HCT116 (cell line): ENCODE measurements at regions of chr15 and their contacts with region 1.

Region 1: GRCh38 chr15:48352474-48353072 is 21.3 kb downstream of the DUT start:
- DNase-seq: peak; percentile 77
- ATAC-seq: peak; percentile 98
- H3K4me3 ChIP-seq: no peak overlapping the region
- H3K27ac ChIP-seq: no peak overlapping the region
- H3K4me1 ChIP-seq: peaks cover 0 to 3% of the 10 kb centered on the region in 2 experiments; a peak in 1 of 4 replicates
- H3K27me3 ChIP-seq: no peaks in the 10 kb centered on the region
- CTCF ChIP-seq: peak; percentile 58 to 93 (median 75); a peak in 5 of 6 replicates
- POLR2A ChIP-seq: no peak
- RAD21 ChIP-seq: peak; percentile 68

Region 2: GRCh38 chr15:47196057-47196456 is 1156.5 kb before region 1 on chr15:
- CTCF ChIA-PET with region 1: interaction called, 3 read pairs
- POLR2A ChIA-PET with region 1: no interaction called
- RAD21 ChIA-PET with region 1: no interaction called
- intact Hi-C with region 1: loop called (anchors 2 kb)
- DNase-seq: peak; percentile 13
- ATAC-seq: peak; percentile 46; the same call in 1 of the 2 replicates
- H3K4me3 ChIP-seq: no peak overlapping the region
- H3K27ac ChIP-seq: no peak overlapping the region
- H3K4me1 ChIP-seq: no peaks in the 10 kb centered on the region
- H3K27me3 ChIP-seq: no peaks in the 10 kb centered on the region
- CTCF ChIP-seq: peak; percentile 4 to 47 (median 44); a peak in 4 of 6 replicates
- POLR2A ChIP-seq: no peak
- RAD21 ChIP-seq: peak; percentile 34

Region 3: GRCh38 chr15:48318131-48318530 is 34.4 kb before region 1 on chr15:
- CTCF ChIA-PET with region 1: no interaction called
- POLR2A ChIA-PET with region 1: no interaction called
- RAD21 ChIA-PET with region 1: no interaction called
- intact Hi-C with region 1: no loop called
- DNase-seq: no peak
- ATAC-seq: no peak
- H3K4me3 ChIP-seq: no peak overlapping the region
- H3K27ac ChIP-seq: no peak overlapping the region
- H3K4me1 ChIP-seq: no peaks in the 10 kb centered on the region
- H3K27me3 ChIP-seq: no peaks in the 10 kb centered on the region; the same call in 1 of the 2 replicates
- CTCF ChIP-seq: no peak
- POLR2A ChIP-seq: no peak
- RAD21 ChIP-seq: no peak

Region 4: DNA sequence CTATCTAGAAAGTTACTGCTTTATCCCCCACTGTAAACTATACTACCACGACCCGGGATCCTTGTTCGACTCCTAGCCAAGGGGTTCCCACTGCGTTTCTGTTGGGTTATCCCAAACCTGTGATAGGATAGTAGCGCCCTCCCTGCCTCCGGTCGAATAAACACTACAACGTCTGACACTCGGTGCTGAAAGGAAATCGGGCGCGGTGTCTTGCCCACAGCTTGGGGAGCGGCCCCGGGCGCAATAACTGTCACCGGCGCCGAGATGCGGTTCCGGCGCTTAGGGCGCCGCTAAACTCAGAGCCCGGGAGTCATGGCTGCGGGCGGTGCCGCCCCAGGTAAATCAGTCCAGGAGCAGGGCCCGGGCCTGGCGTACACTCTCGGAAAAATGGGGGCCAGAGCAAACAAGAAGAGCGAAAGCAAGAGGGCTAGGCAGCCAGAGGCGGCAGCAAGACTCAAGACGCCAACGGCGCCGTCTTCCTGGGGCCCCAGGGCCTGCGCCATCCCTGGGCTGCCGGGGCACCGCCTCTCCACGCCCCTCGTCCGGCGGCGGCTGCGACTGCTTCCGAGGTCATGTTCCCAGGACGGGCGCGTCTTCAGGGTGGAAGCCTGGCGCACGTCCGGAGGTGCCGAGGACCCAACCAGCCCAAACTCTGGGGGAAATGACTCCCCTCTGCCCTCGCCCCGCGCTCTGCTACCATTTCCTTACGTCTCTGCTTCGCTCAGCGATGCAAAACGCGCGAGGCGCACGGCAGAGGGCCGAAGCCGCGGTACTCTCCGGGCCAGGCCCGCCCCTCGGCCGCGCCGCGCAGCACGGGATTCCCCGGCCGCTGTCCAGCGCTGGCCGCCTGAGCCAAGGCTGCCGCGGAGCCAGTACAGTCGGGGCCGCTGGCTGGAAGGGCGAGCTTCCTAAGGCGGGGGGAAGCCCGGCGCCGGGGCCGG is 21.4 kb before region 1 on chr15 and contains the start of gene DUT:
- CTCF ChIA-PET with region 1: no interaction called
- POLR2A ChIA-PET with region 1: no interaction called
- RAD21 ChIA-PET with region 1: no interaction called
- intact Hi-C with region 1: no loop called
- DNase-seq: peak; percentile 34
- ATAC-seq: peak; percentile 86
- H3K4me3 ChIP-seq: peak within 1 kb of the TSS; percentile 82 to 85
- H3K27ac ChIP-seq: peak within 1 kb of the TSS; percentile 97
- H3K4me1 ChIP-seq: peaks cover 13 to 20% of the 10 kb centered on the region in 2 experiments; a peak in 3 of 4 replicates
- H3K27me3 ChIP-seq: no peaks in the 10 kb centered on the region
- CTCF ChIP-seq: no peak
- POLR2A ChIP-seq: peak; percentile 76
- RAD21 ChIP-seq: no peak
- total RNA-seq, gene DUT: 130 TPM

Region 5: GRCh38 chr15:48541341-48542278 is 189.0 kb after region 1 on chr15:
- CTCF ChIA-PET with region 1: no interaction called
- POLR2A ChIA-PET with region 1: no interaction called
- RAD21 ChIA-PET with region 1: no interaction called
- intact Hi-C with region 1: no loop called
- DNase-seq: no peak
- ATAC-seq: no peak
- H3K4me3 ChIP-seq: no peak overlapping the region
- H3K27ac ChIP-seq: no peak overlapping the region
- H3K4me1 ChIP-seq: no peaks in the 10 kb centered on the region
- H3K27me3 ChIP-seq: no peaks in the 10 kb centered on the region
- CTCF ChIP-seq: no peak
- POLR2A ChIP-seq: no peak
- RAD21 ChIP-seq: no peak

Region 6: GRCh38 chr15:48963524-48964113 is 611.0 kb after region 1 on chr15 and contains the start of gene SHC4:
- CTCF ChIA-PET with region 1: no interaction called
- POLR2A ChIA-PET with region 1: no interaction called
- RAD21 ChIA-PET with region 1: no interaction called
- intact Hi-C with region 1: loop called (anchors 10 kb)
- DNase-seq: no peak
- ATAC-seq: peak; percentile 82
- H3K4me3 ChIP-seq: peak within 1 kb of the TSS; percentile 48 to 60
- H3K27ac ChIP-seq: no peak within 1 kb of the TSS; the same call in 1 of the 2 replicates
- H3K4me1 ChIP-seq: peaks cover 4 to 18% of the 10 kb centered on the region in 2 experiments; a peak in 3 of 4 replicates
- H3K27me3 ChIP-seq: no peaks in the 10 kb centered on the region
- CTCF ChIP-seq: peak; percentile 1 to 25 (median 20); a peak in 2 of 6 replicates
- POLR2A ChIP-seq: no peak
- RAD21 ChIP-seq: no peak; the same call in 1 of the 2 replicates
- total RNA-seq, gene SHC4: 0.44 TPM

Region 7: DNA sequence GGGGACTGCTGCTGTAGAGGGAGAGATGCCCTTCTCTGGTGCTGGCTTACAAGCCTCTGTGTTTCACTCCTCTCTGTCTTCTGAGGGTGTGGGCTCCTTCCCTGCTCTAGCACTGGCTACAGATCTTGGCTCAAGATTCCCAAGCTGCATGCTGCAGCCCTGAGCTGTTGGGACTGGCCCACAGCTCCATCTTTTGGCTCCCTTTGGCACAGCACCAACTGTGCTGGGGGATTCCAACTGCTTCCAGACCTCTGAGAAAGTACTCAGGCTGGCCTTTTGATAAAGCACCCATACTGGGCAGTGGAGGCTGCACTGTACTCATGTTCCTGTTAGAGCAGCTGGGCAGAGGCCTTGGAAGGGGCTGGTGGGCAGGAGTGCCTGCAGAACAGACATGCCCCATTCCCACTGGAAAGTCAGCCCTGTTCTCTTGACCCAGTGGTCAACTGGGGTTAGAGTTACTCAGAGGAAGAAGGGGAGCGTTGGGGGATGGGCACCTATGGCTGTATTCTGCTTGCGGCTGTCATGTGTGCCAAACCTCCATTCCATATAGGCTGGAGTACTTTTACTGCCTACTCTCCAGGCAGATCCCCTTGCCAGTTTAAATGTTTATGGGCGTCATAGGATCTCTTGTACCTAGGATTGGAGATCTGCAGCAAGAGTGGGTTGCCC is 873.2 kb after region 1 on chr15:
- CTCF ChIA-PET with region 1: no interaction called
- POLR2A ChIA-PET with region 1: no interaction called
- RAD21 ChIA-PET with region 1: no interaction called
- intact Hi-C with region 1: loop called (anchors 10 kb)
- DNase-seq: peak; percentile 15
- ATAC-seq: peak; percentile 80
- H3K4me3 ChIP-seq: no peak overlapping the region
- H3K27ac ChIP-seq: no peak overlapping the region
- H3K4me1 ChIP-seq: no peaks in the 10 kb centered on the region
- H3K27me3 ChIP-seq: no peaks in the 10 kb centered on the region
- CTCF ChIP-seq: peak in 2 of 3 experiments; percentile 21 to 42; a peak in 3 of 6 replicates
- POLR2A ChIP-seq: no peak
- RAD21 ChIP-seq: peak; percentile 55

Region 8: GRCh38 chr15:49421991-49422390 is 1069.4 kb after region 1 on chr15:
- CTCF ChIA-PET with region 1: no interaction called
- POLR2A ChIA-PET with region 1: no interaction called
- RAD21 ChIA-PET with region 1: no interaction called
- intact Hi-C with region 1: loop called (anchors 10 kb)
- DNase-seq: peak; percentile 54
- ATAC-seq: peak; percentile 65
- H3K4me3 ChIP-seq: no peak overlapping the region
- H3K27ac ChIP-seq: no peak overlapping the region
- H3K4me1 ChIP-seq: no peaks in the 10 kb centered on the region
- H3K27me3 ChIP-seq: no peaks in the 10 kb centered on the region
- CTCF ChIP-seq: peak; percentile 68 to 77 (median 70)
- POLR2A ChIP-seq: no peak
- RAD21 ChIP-seq: peak; percentile 68